Sciatic nerve (tissue), 2 donors: ENCODE measurements at regions of chr4 and their contacts with region 1.

Region 1: GRCh38 chr4:48902266-48902665 is 4.3 kb downstream of the OCIAD2 start:
- DNase-seq: no peak
- ATAC-seq: no peak

Region 2: DNA sequence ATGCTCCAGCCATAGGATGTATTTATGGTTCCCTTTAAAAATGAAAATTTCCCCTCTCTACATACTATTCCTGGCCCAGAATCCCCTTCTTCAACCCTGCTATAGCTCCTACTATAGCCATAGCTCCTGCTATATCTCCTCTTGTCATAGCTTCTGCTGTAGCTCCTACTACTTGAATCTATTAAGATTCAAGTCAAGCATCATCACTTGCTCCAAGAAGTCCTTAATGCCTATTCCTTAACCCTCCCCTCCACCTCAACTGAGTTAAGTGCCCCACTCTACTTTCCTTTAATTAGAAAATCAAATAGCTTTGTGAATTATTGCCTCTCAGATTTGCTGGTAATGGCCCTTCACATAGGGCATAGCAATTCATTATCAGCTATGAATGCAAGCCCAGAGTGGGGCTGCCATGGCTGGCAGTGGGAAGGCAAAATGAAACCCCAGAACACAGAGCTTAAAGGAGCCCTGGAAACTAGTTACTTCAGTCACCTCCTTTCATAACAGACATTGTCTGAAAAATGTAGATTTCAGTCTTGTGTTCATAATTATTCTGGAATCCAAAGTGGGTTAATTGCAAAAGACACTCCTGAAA is 11.1 kb before region 1 on chr4:
- intact Hi-C with region 1: loop called (anchors 1 kb)
- DNase-seq: no peak
- ATAC-seq: no peak